Activated CD4-positive, alpha-beta memory T cell treated with anti-CD3 and anti-CD28 coated beads, Interleukin-2, amount 10 ng/mL, durations not matched to agents 7 days and 5 days (primary cell): ENCODE measurements at regions of chr1 and their contacts with region 1.

Region 1: GRCh38 chr1:37595440-37596319 is at the start of gene GNL2:
- DNase-seq: peak; percentile 97
- H3K4me3 Mint-ChIP-seq: peak within 1 kb of the TSS; percentile 94
- H3K27ac Mint-ChIP-seq: peak within 1 kb of the TSS; percentile 90
- H3K4me1 Mint-ChIP-seq: peaks cover 38% of the 10 kb centered on the region
- H3K27me3 Mint-ChIP-seq: peaks cover 3% of the 10 kb centered on the region
- total RNA-seq, gene GNL2: 50.6 to 52.8 TPM

Region 2: DNA sequence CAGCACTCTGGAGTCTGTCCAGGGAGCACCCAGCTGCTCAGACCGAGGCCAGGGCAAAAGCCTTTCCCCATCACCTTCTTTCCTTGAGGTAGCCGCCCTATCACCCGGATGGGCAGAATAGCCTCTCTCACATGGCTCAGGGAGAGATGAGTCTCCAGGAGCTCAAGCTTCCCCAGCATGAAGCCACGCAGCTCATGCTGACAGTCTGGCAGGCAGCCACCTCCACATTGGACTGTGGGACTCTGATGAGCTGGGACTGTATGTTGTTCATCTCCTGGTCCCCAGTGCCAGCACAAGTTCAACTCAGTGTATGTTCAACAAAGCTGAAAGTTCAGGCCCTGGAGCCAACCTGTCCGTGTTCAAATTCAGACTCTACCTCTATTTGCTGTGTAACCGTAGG is 196.5 kb before region 1 on chr1:
- CTCF ChIA-PET with region 1: no interaction called
- POLR2A ChIA-PET with region 1: no interaction called
- DNase-seq: no peak
- H3K4me3 Mint-ChIP-seq: no peak overlapping the region
- H3K27ac Mint-ChIP-seq: no peak overlapping the region
- H3K4me1 Mint-ChIP-seq: no peaks in the 10 kb centered on the region
- H3K27me3 Mint-ChIP-seq: peaks cover 21% of the 10 kb centered on the region

Region 3: DNA sequence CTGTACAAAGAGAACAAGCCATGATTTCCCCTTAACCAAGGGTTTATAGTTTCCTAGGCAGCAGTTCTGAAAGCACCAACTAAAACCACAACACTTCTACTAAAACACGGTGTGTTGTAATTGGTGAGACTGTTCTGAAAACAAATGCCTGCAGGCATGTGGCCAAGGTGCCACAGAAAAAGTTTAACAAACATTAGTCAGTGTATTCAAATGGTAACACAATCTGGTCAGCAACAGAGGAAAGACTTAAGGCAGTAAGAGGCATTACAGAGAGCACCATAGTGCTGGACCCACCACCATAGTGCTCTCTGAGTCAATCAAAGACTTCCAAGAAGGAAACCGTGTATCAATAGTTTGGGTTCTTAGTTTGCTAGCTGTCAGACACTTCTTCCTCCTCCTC is 58.3 kb before region 1 on chr1:
- CTCF ChIA-PET with region 1: no interaction called
- POLR2A ChIA-PET with region 1: no interaction called
- DNase-seq: no peak
- H3K4me3 Mint-ChIP-seq: no peak overlapping the region
- H3K27ac Mint-ChIP-seq: peak overlapping the region; percentile 4
- H3K4me1 Mint-ChIP-seq: peaks cover 18% of the 10 kb centered on the region
- H3K27me3 Mint-ChIP-seq: no peaks in the 10 kb centered on the region

Region 4: GRCh38 chr1:37574834-37575480 is 20.7 kb before region 1 on chr1:
- CTCF ChIA-PET with region 1: interaction called, 3 read pairs
- POLR2A ChIA-PET with region 1: interaction called, 12 read pairs
- DNase-seq: no peak
- H3K4me3 Mint-ChIP-seq: no peak overlapping the region
- H3K27ac Mint-ChIP-seq: peak overlapping the region; percentile 60
- H3K4me1 Mint-ChIP-seq: peaks cover 71% of the 10 kb centered on the region
- H3K27me3 Mint-ChIP-seq: no peaks in the 10 kb centered on the region

Region 5: DNA sequence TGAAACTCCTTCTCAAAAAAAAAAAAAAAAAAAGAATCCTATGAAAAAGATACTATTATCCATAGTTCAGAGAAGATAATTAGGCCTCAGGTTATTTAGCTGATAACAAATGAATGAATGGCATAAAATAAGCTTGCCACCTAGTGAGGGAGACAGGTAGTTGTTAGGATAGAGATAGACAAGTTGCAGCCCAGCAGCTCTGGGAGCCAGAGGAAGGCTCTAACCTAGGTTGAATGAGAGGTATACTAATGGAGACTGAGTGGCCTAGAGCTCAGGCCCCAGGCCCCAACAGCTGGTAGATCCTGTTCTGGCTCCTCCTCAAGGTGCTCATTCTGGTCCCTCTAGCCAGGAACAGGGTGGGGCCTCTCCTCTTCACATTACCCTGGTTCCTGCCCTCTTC is 59.6 kb after region 1 on chr1:
- CTCF ChIA-PET with region 1: no interaction called
- POLR2A ChIA-PET with region 1: no interaction called
- DNase-seq: no peak
- H3K4me3 Mint-ChIP-seq: no peak overlapping the region
- H3K27ac Mint-ChIP-seq: no peak overlapping the region
- H3K4me1 Mint-ChIP-seq: no peaks in the 10 kb centered on the region
- H3K27me3 Mint-ChIP-seq: peaks cover 14% of the 10 kb centered on the region

Region 6: DNA sequence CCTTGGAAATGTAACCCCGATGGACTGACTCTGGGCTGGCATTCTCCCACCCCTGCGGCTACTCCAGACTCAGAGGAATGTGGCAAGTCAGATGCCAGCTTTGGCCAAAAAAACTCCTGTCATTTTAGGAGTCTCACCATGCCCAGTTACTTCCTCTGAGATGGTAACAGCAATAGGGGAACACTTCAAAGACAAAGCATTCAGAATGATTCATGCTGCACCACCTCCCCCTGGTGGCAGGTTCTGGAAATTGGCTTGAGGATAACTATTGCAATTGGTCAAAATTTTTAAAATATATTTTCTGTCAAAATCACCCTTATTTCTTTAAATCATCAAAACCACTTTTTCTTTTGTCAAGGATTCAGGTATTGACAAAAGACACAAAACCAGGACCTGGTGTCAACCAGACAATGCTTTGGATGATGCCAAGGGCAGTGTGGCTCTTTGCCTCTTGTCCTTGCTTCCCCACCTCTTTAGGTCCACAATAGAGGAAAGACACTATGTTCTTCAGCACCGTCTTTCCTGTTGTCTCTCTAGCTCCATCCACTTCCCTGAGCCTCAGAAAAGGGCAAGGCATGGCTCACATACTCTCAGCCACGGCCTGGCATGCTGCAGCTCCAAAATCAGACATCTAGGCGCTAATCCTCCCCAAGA is 86.8 kb after region 1 on chr1:
- CTCF ChIA-PET with region 1: interaction called, 88 read pairs
- POLR2A ChIA-PET with region 1: no interaction called
- DNase-seq: peak; percentile 78
- H3K4me3 Mint-ChIP-seq: no peak overlapping the region
- H3K27ac Mint-ChIP-seq: no peak overlapping the region
- H3K4me1 Mint-ChIP-seq: peaks cover 6% of the 10 kb centered on the region
- H3K27me3 Mint-ChIP-seq: no peaks in the 10 kb centered on the region

Region 7: DNA sequence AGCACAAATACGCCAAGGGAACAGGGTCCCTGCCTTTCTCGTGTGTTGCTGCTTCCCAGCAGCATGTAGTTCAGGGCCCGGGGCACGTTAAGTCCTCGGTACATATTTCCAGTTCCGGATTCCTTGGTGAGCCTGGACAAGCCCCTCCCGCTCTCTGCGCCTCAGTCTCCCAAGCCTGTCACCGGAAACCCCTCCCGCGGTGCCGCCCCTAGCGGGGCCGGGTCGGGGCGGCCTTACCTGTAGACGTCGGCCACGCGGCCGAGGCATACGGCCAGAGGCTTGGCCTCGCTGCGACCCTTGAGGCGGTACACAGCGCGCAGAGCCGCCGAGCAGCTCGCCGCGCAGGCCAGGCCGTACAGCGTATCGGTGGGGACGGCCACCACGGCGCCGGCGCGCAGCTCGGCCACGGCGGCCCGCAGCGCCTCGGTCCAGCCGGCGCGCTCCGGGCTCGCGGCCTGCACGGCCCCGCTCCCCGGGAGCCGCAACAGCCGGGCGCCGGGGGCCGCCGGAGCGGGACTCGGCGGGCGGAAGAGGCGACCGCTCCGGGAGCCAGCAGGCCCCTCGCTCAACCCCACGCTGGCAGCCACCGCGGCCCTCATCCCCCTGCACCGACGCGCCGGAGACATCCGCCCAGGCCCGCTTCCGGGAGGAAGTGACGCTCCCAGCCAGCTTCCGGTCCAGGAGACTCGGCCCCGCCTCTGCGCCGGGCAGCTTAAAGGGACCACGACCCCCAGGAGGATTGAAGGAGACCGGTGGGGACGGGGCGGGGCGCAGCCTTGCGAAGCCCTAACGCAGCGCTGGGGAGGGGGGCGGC is 212.1 kb after region 1 on chr1 and contains the starts of genes C1orf122 and YRDC:
- CTCF ChIA-PET with region 1: no interaction called
- POLR2A ChIA-PET with region 1: no interaction called
- DNase-seq: peak; percentile 94
- H3K4me3 Mint-ChIP-seq: peak within 1 kb of the TSS; percentile 98
- H3K27ac Mint-ChIP-seq: peak within 1 kb of the TSS; percentile 93
- H3K4me1 Mint-ChIP-seq: peaks cover 40% of the 10 kb centered on the region
- H3K27me3 Mint-ChIP-seq: no peaks in the 10 kb centered on the region
- total RNA-seq, gene C1orf122: 17.3 to 18.3 TPM
- total RNA-seq, gene YRDC: 16.4 to 16.8 TPM